ENCODE measurements at regions of chr16 and their contacts with region 1.

Region 1: GRCh38 chr16:65117811-65118448 is 3.9 kb downstream of the CDH11 start:
- DNase-seq: peak; percentile 85
- H3K4me3 ChIP-seq: no peak overlapping the region
- H3K27ac ChIP-seq: peak overlapping the region; percentile 12 to 93 (median 64)
- H3K4me1 ChIP-seq: peaks cover 0 to 72% (median 42%) of the 10 kb centered on the region in 4 donors
- H3K27me3 ChIP-seq: no peaks in the 10 kb centered on the region
- CTCF ChIP-seq: peak; percentile 71 to 91 (median 86)
- EP300 ChIP-seq: no peak
- POLR2A ChIP-seq: no peak

Region 2: DNA sequence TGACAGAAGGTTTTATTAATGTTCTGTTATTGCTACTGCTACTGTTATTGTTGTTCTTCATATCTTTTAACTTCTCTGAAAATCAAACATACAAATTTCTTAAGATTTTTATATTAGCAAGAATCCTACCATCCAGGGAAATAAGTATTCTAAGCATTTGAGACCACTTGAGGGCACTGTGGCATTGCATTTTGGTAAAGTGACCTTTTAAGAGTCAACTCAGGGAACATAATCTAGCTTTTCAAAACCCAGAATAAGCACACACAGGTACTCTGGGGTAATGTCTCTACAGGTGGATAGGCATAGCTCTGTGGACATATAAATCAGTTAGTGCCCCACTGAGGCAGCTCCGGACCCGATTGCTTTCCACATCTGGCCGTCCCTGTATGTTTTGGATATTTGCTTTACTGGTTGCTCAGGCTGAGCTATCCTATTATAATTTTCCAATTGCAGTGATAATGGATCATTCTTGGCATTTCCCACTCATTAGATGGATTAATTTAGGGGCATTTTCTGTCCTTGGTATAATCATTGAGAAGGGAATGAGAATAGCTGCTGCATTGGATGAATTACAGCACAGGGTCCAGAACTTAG is 1656.6 kb before region 1 on chr16:
- intact Hi-C with region 1: loop called (anchors 5 kb)
- DNase-seq: no peak
- H3K4me3 ChIP-seq: no peak overlapping the region
- H3K27ac ChIP-seq: no peak overlapping the region
- H3K4me1 ChIP-seq: no peaks in the 10 kb centered on the region
- H3K27me3 ChIP-seq: no peaks in the 10 kb centered on the region
- CTCF ChIP-seq: peak in 1 of 4 experiments; percentile 44
- EP300 ChIP-seq: no peak
- POLR2A ChIP-seq: no peak

Region 3: GRCh38 chr16:65070831-65071432 is 47.0 kb before region 1 on chr16:
- intact Hi-C with region 1: loop called (anchors 5 kb)
- DNase-seq: peak; percentile 80
- H3K4me3 ChIP-seq: peak overlapping the region in 3 of 4 donors; percentile 28 to 31 (median 30)
- H3K27ac ChIP-seq: peak overlapping the region; percentile 70 to 85 (median 76)
- H3K4me1 ChIP-seq: peaks cover 0 to 61% (median 37%) of the 10 kb centered on the region in 4 donors
- H3K27me3 ChIP-seq: no peaks in the 10 kb centered on the region
- CTCF ChIP-seq: no peak
- EP300 ChIP-seq: no peak
- POLR2A ChIP-seq: no peak

Region 4: DNA sequence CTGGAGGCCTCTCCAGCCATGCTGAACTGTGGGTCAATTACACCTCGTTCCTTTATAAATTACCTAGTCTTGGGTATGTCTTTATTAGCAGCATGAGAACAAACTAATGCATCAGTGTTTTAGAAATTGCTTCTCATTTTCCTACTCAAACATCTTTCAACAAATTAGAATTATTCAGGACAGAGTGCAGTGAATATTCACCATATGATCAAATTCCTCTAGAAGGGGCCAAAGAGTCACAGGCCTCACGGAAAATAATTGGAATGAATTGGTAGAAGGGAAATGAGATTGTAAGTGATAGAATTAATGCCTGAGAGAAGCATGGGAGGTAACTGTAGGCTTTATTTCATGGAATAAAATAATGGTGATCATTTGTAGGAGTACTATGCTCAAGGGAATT is 54.4 kb after region 1 on chr16:
- intact Hi-C with region 1: no loop called
- DNase-seq: no peak
- H3K4me3 ChIP-seq: no peak overlapping the region
- H3K27ac ChIP-seq: no peak overlapping the region
- H3K4me1 ChIP-seq: no peaks in the 10 kb centered on the region
- H3K27me3 ChIP-seq: no peaks in the 10 kb centered on the region
- CTCF ChIP-seq: no peak
- EP300 ChIP-seq: no peak
- POLR2A ChIP-seq: no peak

Region 5: DNA sequence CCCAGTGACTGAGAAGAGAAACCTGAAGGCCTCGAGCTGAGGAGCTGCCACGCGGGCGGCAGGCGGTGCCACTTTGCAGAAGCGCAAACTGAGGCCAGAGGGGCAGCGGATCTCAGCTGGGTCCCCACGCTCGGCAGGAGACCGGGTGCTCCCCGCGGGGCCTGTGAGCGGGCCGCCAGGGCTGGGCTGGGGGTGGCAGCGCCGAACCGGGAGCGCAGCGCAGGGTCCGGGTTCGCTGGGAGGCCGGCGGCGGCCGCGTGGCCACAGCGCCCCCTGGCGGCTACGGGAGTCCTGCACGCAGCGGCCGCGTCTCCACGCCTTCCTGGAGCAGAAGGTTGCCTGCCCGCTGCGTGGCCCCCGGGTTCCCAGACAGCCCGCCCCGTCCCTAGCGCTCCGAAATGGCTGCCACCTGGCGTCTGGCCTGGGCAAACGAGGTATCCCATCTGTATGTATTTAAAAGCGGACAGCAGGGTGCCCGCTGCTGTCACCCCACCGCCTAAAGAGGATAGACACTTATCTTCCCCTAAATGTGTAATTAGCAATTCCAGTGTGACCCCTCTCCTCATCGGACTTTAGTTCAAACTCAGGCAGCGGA is 1152.5 kb after region 1 on chr16:
- intact Hi-C with region 1: loop called (anchors 2 kb)
- DNase-seq: peak; percentile 78
- H3K4me3 ChIP-seq: peak overlapping the region; percentile 15 to 47 (median 38)
- H3K27ac ChIP-seq: peak overlapping the region in 3 of 4 donors; percentile 29 to 50 (median 41)
- H3K4me1 ChIP-seq: peaks cover 0 to 22% (median 10%) of the 10 kb centered on the region in 4 donors
- H3K27me3 ChIP-seq: no peaks in the 10 kb centered on the region
- CTCF ChIP-seq: peak; percentile 35 to 99 (median 46)
- EP300 ChIP-seq: no peak
- POLR2A ChIP-seq: no peak

Measured in sigmoid colon (tissue), 7 donors.